ENCODE measurements at regions of chr4 and their contacts with region 1.

Region 1: DNA sequence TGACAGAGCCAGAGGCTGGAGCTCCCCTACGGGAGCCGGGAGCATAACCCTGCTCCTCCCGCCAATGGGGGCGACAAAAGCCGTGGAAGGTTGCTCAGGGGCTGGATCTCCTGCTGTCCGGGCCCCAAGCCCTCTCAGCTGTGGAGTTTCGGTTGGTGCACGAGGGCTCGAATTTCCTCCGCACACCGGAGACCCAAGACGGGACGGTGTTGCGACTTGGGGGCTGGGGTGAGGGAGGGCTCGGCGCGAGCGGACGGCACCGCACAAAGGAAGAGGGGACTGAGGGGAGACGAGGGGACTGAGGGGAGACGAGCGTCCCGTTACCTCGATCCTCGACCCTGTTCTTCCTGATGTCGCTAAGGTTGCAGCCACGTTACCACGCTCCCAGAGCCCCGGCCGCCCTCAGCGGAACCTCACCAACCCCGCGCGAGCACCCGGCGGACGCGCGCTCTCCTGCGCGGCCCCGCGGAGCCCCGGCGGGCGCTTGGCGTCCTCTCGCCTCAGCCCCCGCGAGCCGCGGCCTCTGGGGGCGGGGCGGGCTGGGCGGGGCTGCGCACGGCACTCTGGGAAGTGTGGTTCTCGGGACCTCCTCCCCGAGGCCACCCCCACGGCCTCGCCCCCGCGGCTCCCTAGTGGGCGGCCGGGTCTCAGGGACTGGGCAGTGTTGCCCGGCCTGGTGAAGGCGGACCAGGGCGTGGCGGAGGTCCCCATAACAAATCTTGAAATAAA is at the start of gene KLHL8:
- DNase-seq: peak; percentile 98
- H3K4me3 ChIP-seq: peak within 1 kb of the TSS; percentile 91 to 98
- H3K27ac ChIP-seq: peak within 1 kb of the TSS; percentile 79 to 94
- H3K4me1 ChIP-seq: peaks cover 0 to 2% of the 10 kb centered on the region in 2 experiments; a peak in 1 of 4 replicates
- H3K27me3 ChIP-seq: no peaks in the 10 kb centered on the region
- CTCF ChIP-seq: peak; percentile 31; the same call in 1 of the 2 replicates
- EP300 ChIP-seq: no peak
- RAD21 ChIP-seq: no peak
- polyA plus RNA-seq, gene KLHL8: 2.4 and 2.8 TPM in 2 replicates

Region 2: GRCh38 chr4:87209696-87210095 is 10.6 kb before region 1 on chr4:
- CTCF ChIA-PET with region 1: interaction called, 11 read pairs
- POLR2A ChIA-PET with region 1: no interaction called
- DNase-seq: no peak
- H3K4me3 ChIP-seq: no peak overlapping the region
- H3K27ac ChIP-seq: no peak overlapping the region
- H3K4me1 ChIP-seq: peaks cover 0 to 4% of the 10 kb centered on the region in 2 experiments; a peak in 2 of 4 replicates
- H3K27me3 ChIP-seq: no peaks in the 10 kb centered on the region
- CTCF ChIP-seq: no peak
- EP300 ChIP-seq: no peak
- RAD21 ChIP-seq: no peak

Region 3: GRCh38 chr4:87235020-87235671 is 14.9 kb after region 1 on chr4:
- CTCF ChIA-PET with region 1: interaction called, 19 read pairs
- POLR2A ChIA-PET with region 1: no interaction called
- DNase-seq: no peak
- H3K4me3 ChIP-seq: peak overlapping the region; percentile 40 to 63
- H3K27ac ChIP-seq: no peak overlapping the region
- H3K4me1 ChIP-seq: peaks cover 0 to 14% of the 10 kb centered on the region in 2 experiments; a peak in 1 of 4 replicates
- H3K27me3 ChIP-seq: no peaks in the 10 kb centered on the region
- CTCF ChIP-seq: no peak
- EP300 ChIP-seq: no peak
- RAD21 ChIP-seq: no peak

Region 4: DNA sequence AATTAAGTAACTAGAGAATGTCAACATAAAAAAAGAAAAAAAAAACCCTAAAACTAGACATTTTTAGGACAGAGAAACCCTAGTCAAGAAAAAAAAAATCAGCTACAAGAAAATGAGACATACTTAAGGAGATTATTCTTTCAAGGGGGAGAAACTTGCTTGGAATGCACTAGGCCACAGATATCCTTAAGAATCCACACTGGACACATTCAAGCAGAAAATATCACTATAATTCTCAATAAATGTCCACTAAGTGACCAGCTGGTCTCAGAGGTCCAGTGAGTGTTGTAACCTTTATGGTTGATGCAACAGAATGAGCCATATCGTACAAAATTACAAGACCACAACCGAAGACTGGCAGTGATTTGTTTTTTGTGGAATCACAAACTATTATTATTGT is 563.5 kb after region 1 on chr4:
- CTCF ChIA-PET with region 1: no interaction called
- POLR2A ChIA-PET with region 1: no interaction called
- DNase-seq: no peak
- H3K4me3 ChIP-seq: no peak overlapping the region
- H3K27ac ChIP-seq: no peak overlapping the region
- H3K4me1 ChIP-seq: no peaks in the 10 kb centered on the region
- H3K27me3 ChIP-seq: no peaks in the 10 kb centered on the region
- CTCF ChIP-seq: no peak
- EP300 ChIP-seq: no peak
- RAD21 ChIP-seq: no peak

Measured in SK-N-SH (cell line).